Transverse colon (tissue), 4 donors: ENCODE measurements at regions of chr4 and their contacts with region 1.

Region 1: GRCh38 chr4:150297861-150298474 is 219.7 kb downstream of the DCLK2 start:
- DNase-seq: peak; percentile 21
- H3K4me3 ChIP-seq: no peak overlapping the region
- H3K27ac ChIP-seq: peak overlapping the region; percentile 4 to 67 (median 40)
- H3K4me1 ChIP-seq: peaks cover 0 to 4% (median 0%) of the 10 kb centered on the region in 4 donors
- H3K27me3 ChIP-seq: no peaks in the 10 kb centered on the region
- CTCF ChIP-seq: peak; percentile 52 to 63 (median 59)
- EP300 ChIP-seq: no peak
- POLR2A ChIP-seq: no peak

Region 2: GRCh38 chr4:150583287-150584110 is 285.5 kb after region 1 on chr4:
- in situ Hi-C with region 1: loop called in 2 of 4 experiments (anchors 10 to 25 kb)
- intact Hi-C with region 1: loop called (anchors 5 kb)
- DNase-seq: peak; percentile 29
- H3K4me3 ChIP-seq: peak overlapping the region; percentile 28 to 52 (median 46)
- H3K27ac ChIP-seq: peak overlapping the region; percentile 84 to 91 (median 88)
- H3K4me1 ChIP-seq: peaks cover 0 to 2% (median 0%) of the 10 kb centered on the region in 4 donors
- H3K27me3 ChIP-seq: no peaks in the 10 kb centered on the region
- CTCF ChIP-seq: no peak
- EP300 ChIP-seq: no peak
- POLR2A ChIP-seq: peak; percentile 15

Region 3: DNA sequence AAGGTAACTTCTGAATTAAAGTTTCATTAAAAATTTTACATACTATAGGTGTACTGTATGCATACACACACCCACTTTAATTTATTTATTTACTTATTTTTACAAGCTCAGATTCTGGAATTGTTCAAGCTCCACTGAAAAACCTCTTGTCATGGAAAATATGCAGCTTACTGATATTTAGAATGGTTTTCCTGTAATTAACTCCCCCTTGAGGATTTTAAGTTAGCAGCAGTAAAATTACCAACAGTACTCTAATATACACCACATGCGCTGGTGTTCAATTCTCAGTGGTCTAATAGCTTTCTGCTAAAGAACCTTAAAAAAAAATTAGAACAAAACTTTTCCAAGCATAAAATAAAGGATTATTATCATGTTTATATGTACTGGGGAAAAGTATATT is 296.0 kb after region 1 on chr4:
- in situ Hi-C with region 1: loop called in 2 of 4 experiments (anchors 10 to 25 kb)
- intact Hi-C with region 1: no loop called
- DNase-seq: no peak
- H3K4me3 ChIP-seq: no peak overlapping the region
- H3K27ac ChIP-seq: peak overlapping the region; percentile 82 to 89 (median 85)
- H3K4me1 ChIP-seq: peaks cover 0 to 8% (median 0%) of the 10 kb centered on the region in 4 donors
- H3K27me3 ChIP-seq: no peaks in the 10 kb centered on the region
- CTCF ChIP-seq: peak in 2 of 5 experiments; percentile 5 to 9
- EP300 ChIP-seq: no peak
- POLR2A ChIP-seq: no peak

Region 4: DNA sequence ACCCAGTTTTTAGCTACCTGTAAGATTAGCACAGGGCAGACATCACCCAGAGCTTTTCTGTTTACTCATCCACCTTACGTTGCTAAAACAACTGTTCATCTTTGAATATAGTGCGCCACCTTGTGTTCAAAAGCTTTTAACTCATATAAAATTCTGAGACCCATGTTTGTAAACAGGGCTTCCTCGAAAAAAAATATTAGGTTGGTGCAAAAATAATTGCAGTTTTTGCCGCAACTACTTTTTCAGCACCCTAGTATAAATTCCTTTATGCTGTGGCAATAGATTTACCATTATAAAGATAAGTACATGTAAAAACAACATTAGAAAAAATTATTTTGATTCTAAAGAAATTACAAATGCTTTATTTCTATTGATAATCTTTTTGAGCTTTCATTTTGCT is 569.2 kb after region 1 on chr4:
- in situ Hi-C with region 1: loop called in 3 of 4 experiments (anchors 10 to 25 kb)
- intact Hi-C with region 1: loop called (anchors 5 kb)
- DNase-seq: no peak
- H3K4me3 ChIP-seq: no peak overlapping the region
- H3K27ac ChIP-seq: no peak overlapping the region
- H3K4me1 ChIP-seq: no peaks in the 10 kb centered on the region
- H3K27me3 ChIP-seq: no peaks in the 10 kb centered on the region
- CTCF ChIP-seq: peak; percentile 55 to 78 (median 63)
- EP300 ChIP-seq: no peak
- POLR2A ChIP-seq: no peak